AG04449 (cell line): ENCODE measurements at regions of chr21 and their contacts with region 1.

Region 1: GRCh38 chr21:17387030-17387617 is 125.7 kb upstream of the CXADR start:
- DNase-seq: peak; percentile 3
- H3K4me3 ChIP-seq: no peak overlapping the region
- CTCF ChIP-seq: peak; percentile 36

Region 2: DNA sequence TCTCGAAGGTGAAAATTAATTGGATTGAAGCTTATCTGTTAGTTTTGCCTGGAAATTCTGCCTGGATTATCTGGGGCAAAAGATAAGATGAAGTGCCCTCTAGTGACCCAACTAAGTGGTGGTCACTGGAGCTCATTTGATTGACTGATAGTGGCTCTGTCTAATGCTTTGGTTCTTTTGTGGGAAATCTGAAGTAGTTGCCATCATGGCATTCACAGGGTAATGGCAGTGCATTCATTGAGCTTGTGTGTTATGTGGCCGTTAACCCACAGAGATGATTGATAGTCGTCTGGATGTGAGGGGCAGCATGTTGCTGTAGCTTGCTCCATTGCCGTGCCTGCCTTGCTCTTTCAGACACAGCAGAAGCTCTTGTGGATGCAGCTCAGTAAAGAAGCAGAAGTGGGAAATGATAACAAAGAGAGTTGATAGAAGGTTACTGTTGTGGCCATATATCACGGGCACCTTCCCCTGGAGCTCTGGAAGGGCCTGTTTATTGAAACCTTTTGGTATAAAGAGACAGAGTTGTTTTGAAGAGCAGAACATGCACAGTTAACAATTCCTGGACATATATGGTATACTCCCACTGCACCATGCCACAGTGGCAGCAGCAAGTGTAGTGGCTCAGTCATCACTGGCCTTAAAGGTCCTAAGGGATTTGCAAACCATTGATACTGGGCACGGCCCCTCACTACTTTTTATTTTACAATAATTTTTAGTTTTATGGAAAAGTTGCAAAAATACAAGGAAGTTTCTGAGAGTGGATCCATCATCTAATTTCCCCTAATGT is 167.7 kb after region 1 on chr21:
- CTCF ChIA-PET with region 1: interaction called, 38 read pairs
- POLR2A ChIA-PET with region 1: no interaction called
- DNase-seq: no peak
- H3K4me3 ChIP-seq: no peak overlapping the region
- CTCF ChIP-seq: no peak

Region 3: DNA sequence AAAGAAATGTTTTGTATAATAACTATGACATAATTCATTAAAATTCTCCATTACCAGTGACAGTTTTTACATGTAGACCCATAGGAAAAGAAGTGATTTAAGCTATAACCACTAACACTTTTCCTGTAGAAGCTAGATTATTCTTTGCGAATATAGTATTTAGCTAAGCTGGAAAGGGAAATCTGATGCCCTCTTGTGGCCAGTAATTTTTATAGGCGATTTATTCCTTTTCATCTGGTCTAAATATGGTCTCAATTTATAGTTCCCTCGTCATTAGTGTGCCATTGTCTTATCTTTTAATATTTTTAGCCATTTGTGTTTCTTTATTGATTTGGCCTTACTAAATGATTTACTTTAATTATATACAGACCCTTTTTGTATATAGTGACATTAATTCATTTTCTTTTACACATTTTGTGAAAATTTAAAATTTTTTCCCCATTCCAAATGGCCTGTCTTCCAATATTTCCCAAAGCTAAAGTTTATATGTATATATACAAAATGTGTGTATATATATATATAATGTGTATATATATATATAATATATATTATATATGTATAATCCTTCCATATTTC is 198.8 kb after region 1 on chr21:
- CTCF ChIA-PET with region 1: interaction called, 126 read pairs
- POLR2A ChIA-PET with region 1: no interaction called
- DNase-seq: no peak
- H3K4me3 ChIP-seq: no peak overlapping the region
- CTCF ChIP-seq: peak; percentile 51